Dendritic cell treated with granulocyte-macrophage colony-stimulating factor and Interleukin-4, amounts not matched to agents 40 ng/mL and 50 ng/mL, for 4 days (primary cell): ENCODE measurements at regions of chr17 and their contacts with region 1.

Region 1: DNA sequence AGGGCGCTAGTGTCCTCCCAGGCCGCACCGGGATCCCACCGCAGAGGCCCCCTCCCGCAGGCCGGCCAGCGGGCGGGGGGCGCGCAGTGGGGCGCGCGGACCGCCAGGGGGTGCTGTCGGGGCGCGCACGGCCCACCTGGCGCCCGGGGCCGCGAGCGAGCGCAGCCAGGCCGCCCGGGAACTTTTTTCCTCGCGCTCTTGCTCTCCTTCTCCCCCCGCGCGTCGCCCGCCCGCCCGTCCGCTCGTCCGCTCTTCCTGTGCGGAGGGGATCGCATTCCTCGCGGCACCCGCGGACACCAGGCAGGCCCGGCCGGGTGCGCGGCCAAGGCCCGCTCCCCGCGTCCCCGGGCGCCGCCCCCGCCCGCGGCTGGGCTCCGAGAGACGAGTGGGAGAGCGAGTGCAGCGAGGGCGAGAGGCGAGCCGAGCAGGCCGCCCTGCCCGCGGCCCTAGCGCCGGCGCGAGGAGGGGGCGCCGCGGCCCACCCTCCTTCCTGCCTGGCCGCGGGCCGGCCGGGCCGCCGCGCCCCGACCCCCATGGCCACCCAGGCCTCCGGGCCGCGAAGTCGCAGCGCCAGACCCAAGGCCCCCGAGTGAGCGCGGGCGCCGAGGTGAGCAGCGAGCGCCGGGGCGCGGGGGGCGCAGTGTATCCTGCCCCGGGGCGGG is at the start of gene RAI1:
- H3K4me3 Mint-ChIP-seq: peak within 1 kb of the TSS; percentile 90
- H3K27ac Mint-ChIP-seq: peak within 1 kb of the TSS; percentile 92
- H3K4me1 Mint-ChIP-seq: peaks cover 41% of the 10 kb centered on the region
- H3K27me3 Mint-ChIP-seq: peaks cover 10% of the 10 kb centered on the region

Region 2: GRCh38 chr17:17752089-17752820 is 70.9 kb after region 1 on chr17:
- intact Hi-C with region 1: loop called (anchors 2 kb)
- H3K4me3 Mint-ChIP-seq: peak overlapping the region; percentile 85
- H3K27ac Mint-ChIP-seq: peak overlapping the region; percentile 93
- H3K4me1 Mint-ChIP-seq: peaks cover 56% of the 10 kb centered on the region
- H3K27me3 Mint-ChIP-seq: peaks cover 8% of the 10 kb centered on the region

Region 3: DNA sequence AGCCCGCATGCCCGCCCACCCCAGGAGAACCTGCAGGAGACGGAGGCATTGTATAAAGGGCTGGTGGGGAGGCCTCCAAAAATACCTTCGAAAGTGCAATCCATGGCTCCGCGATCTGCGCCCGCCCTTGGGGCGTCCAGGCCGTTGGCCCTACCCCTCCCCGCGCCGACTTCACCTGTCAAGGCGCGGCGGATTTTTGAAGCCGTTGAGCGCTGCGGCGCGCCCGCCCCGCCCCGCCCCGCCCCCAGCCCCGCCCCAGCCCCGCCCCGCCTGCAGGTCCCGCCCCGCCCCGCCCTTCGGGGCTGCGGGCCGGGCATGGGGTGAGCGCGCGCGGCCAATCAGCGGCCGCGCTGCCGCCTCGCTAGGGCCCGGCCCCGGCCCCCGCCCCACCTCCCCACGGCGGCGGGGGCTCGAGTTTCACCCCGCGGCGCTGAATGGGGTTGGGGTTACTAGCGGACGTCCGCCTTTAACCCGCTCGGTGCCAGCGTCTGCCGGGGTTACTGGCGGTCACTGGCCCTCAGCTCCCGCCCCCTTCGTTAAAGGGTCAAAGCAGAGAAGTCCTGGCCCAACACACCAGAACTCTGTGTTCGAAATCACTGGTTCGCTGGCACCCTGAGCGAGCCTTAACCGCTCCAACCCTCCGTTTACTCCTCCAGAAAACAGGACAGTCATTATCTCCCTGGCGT is 142.3 kb after region 1 on chr17:
- intact Hi-C with region 1: loop called (anchors 10 kb)
- H3K4me3 Mint-ChIP-seq: peak overlapping the region; percentile 67
- H3K27ac Mint-ChIP-seq: peak overlapping the region; percentile 74
- H3K4me1 Mint-ChIP-seq: peaks cover 91% of the 10 kb centered on the region
- H3K27me3 Mint-ChIP-seq: no peaks in the 10 kb centered on the region

Region 4: DNA sequence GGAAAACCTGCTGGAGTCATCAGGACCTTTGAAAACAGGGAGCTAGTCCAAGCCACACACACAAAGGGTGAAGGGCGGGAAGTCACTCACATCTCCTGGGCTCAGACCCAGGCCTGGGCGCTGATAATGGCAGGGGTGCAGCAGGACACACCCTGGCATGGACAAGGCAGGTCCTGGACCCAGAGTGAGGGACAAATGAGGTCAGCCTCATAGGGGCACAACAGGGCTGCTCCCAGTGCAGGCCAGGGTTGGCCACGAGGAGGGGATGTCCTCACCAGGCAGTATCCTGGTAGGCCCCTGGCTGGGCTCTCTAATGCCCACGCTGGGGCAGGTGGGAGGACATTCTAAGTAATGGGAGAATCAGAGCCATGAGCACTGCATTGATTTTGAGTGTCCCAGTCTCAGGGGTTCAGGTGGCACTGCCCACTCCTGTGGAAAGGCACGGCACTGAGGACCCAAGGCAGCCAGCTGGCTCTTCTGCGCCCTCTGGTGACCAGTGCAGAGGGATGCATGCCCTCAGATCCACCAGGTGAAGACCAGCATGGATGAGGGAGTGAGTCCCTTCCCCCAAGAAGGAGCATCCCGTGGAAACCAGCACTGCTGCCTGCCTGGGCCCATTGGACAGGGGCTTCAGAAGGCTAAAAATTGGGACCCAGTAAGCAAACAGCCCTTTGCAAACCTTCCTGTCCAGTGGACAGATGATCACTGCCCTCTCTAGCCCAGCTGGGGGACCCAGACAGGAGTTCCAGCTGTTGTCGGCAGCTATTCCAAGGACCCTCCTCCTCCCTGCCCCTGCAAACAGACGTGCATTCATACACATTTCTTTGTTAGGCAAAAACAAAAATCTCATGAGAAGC is 178.8 kb after region 1 on chr17:
- intact Hi-C with region 1: loop called (anchors 5 kb)
- H3K4me3 Mint-ChIP-seq: no peak overlapping the region
- H3K27ac Mint-ChIP-seq: no peak overlapping the region
- H3K4me1 Mint-ChIP-seq: peaks cover 16% of the 10 kb centered on the region
- H3K27me3 Mint-ChIP-seq: no peaks in the 10 kb centered on the region

Region 5: GRCh38 chr17:18033442-18034099 is 352.3 kb after region 1 on chr17:
- intact Hi-C with region 1: loop called (anchors 5 kb)
- H3K4me3 Mint-ChIP-seq: no peak overlapping the region
- H3K27ac Mint-ChIP-seq: peak overlapping the region; percentile 32
- H3K4me1 Mint-ChIP-seq: peaks cover 42% of the 10 kb centered on the region
- H3K27me3 Mint-ChIP-seq: no peaks in the 10 kb centered on the region